Natural killer cell (primary cell): ENCODE measurements at regions of chr3 and their contacts with region 1.

Region 1: GRCh38 chr3:105686278-105686897 is 182.4 kb downstream of the CBLB start:
- DNase-seq: peak in 1 of 2 donors; percentile 61
- ATAC-seq: peak; percentile 70 to 81 (median 75)
- H3K4me3 ChIP-seq: no peak overlapping the region
- H3K4me3 Mint-ChIP-seq: no peak overlapping the region
- H3K27ac ChIP-seq: no peak overlapping the region
- H3K27ac Mint-ChIP-seq: peak overlapping the region; percentile 70 to 88
- H3K4me1 ChIP-seq: no peaks in the 10 kb centered on the region
- H3K4me1 Mint-ChIP-seq: peaks cover 16 to 24% of the 10 kb centered on the region in 2 donors
- H3K27me3 ChIP-seq: no peaks in the 10 kb centered on the region
- H3K27me3 Mint-ChIP-seq: no peaks in the 10 kb centered on the region
- CTCF ChIP-seq: peak; percentile 97

Region 2: GRCh38 chr3:105827959-105828358 is 141.6 kb after region 1 on chr3:
- intact Hi-C with region 1: loop called (anchors 5 kb)
- DNase-seq: peak in 1 of 2 donors; percentile 40
- ATAC-seq: no peak
- H3K4me3 ChIP-seq: no peak overlapping the region
- H3K4me3 Mint-ChIP-seq: peak overlapping the region; percentile 30
- H3K27ac ChIP-seq: peak overlapping the region; percentile 56
- H3K27ac Mint-ChIP-seq: peak overlapping the region; percentile 83
- H3K4me1 ChIP-seq: peaks cover 28% of the 10 kb centered on the region
- H3K4me1 Mint-ChIP-seq: peaks cover 87 to 88% of the 10 kb centered on the region in 2 donors
- H3K27me3 ChIP-seq: no peaks in the 10 kb centered on the region
- H3K27me3 Mint-ChIP-seq: no peaks in the 10 kb centered on the region
- CTCF ChIP-seq: no peak

Region 3: GRCh38 chr3:106119614-106120082 is 433.3 kb after region 1 on chr3:
- intact Hi-C with region 1: loop called (anchors 5 kb)
- DNase-seq: no peak
- ATAC-seq: no peak
- H3K4me3 ChIP-seq: no peak overlapping the region
- H3K4me3 Mint-ChIP-seq: no peak overlapping the region
- H3K27ac ChIP-seq: no peak overlapping the region
- H3K27ac Mint-ChIP-seq: no peak overlapping the region
- H3K4me1 ChIP-seq: no peaks in the 10 kb centered on the region
- H3K4me1 Mint-ChIP-seq: peaks cover 0 to 4% of the 10 kb centered on the region in 2 donors
- H3K27me3 ChIP-seq: no peaks in the 10 kb centered on the region
- H3K27me3 Mint-ChIP-seq: no peaks in the 10 kb centered on the region
- CTCF ChIP-seq: no peak

Region 4: GRCh38 chr3:106333911-106334618 is 647.7 kb after region 1 on chr3:
- intact Hi-C with region 1: loop called (anchors 10 kb)
- DNase-seq: peak in 1 of 2 donors; percentile 55
- ATAC-seq: peak; percentile 58 to 83 (median 80)
- H3K4me3 ChIP-seq: no peak overlapping the region
- H3K4me3 Mint-ChIP-seq: peak overlapping the region; percentile 64
- H3K27ac ChIP-seq: no peak overlapping the region
- H3K27ac Mint-ChIP-seq: peak overlapping the region; percentile 46 to 75
- H3K4me1 ChIP-seq: peaks cover 6% of the 10 kb centered on the region
- H3K4me1 Mint-ChIP-seq: peaks cover 40 to 47% of the 10 kb centered on the region in 2 donors
- H3K27me3 ChIP-seq: no peaks in the 10 kb centered on the region
- H3K27me3 Mint-ChIP-seq: no peaks in the 10 kb centered on the region
- CTCF ChIP-seq: no peak

Region 5: GRCh38 chr3:106609666-106610301 is 923.4 kb after region 1 on chr3:
- intact Hi-C with region 1: loop called (anchors 1 kb)
- DNase-seq: peak; percentile 23 to 86
- ATAC-seq: peak; percentile 70 to 82 (median 77)
- H3K4me3 ChIP-seq: no peak overlapping the region
- H3K4me3 Mint-ChIP-seq: no peak overlapping the region
- H3K27ac ChIP-seq: no peak overlapping the region
- H3K27ac Mint-ChIP-seq: no peak overlapping the region
- H3K4me1 ChIP-seq: no peaks in the 10 kb centered on the region
- H3K4me1 Mint-ChIP-seq: no peaks in the 10 kb centered on the region
- H3K27me3 ChIP-seq: no peaks in the 10 kb centered on the region
- H3K27me3 Mint-ChIP-seq: peaks cover 0 to 3% of the 10 kb centered on the region in 2 donors
- CTCF ChIP-seq: peak; percentile 90